Activated T-helper 2 cell treated with anti-CD3 and anti-CD28 coated beads, Interferon-gamma antibody, Interleukin-2, Interleukin-4, amounts not matched to agents 10 μg/mL and 5 μg/mL and 100 μg/mL, durations not matched to agents 14 hours and 24 hours and 36 hours (primary cell): ENCODE measurements at regions of chr2 and their contacts with region 1.

Region 1: GRCh38 chr2:158753641-158754611 is 41.2 kb upstream of the DAPL1 start:
- DNase-seq: peak; percentile 11
- H3K4me3 Mint-ChIP-seq: no peak overlapping the region
- H3K27ac Mint-ChIP-seq: no peak overlapping the region
- H3K4me1 Mint-ChIP-seq: no peaks in the 10 kb centered on the region
- H3K27me3 Mint-ChIP-seq: peaks cover 10% of the 10 kb centered on the region

Region 2: GRCh38 chr2:157492189-157492773 is 1261.6 kb before region 1 on chr2:
- intact Hi-C with region 1: loop called (anchors 10 kb)
- DNase-seq: peak; percentile 56
- H3K4me3 Mint-ChIP-seq: no peak overlapping the region
- H3K27ac Mint-ChIP-seq: no peak overlapping the region
- H3K4me1 Mint-ChIP-seq: peaks cover 47% of the 10 kb centered on the region
- H3K27me3 Mint-ChIP-seq: no peaks in the 10 kb centered on the region

Region 3: GRCh38 chr2:157777427-157777826 is 976.5 kb before region 1 on chr2:
- intact Hi-C with region 1: loop called (anchors 10 kb)
- DNase-seq: peak; percentile 20
- H3K4me3 Mint-ChIP-seq: no peak overlapping the region
- H3K27ac Mint-ChIP-seq: no peak overlapping the region
- H3K4me1 Mint-ChIP-seq: peaks cover 29% of the 10 kb centered on the region
- H3K27me3 Mint-ChIP-seq: no peaks in the 10 kb centered on the region

Region 4: GRCh38 chr2:158024288-158024898 is 729.5 kb before region 1 on chr2:
- intact Hi-C with region 1: loop called (anchors 5 kb)
- DNase-seq: no peak
- H3K4me3 Mint-ChIP-seq: no peak overlapping the region
- H3K27ac Mint-ChIP-seq: no peak overlapping the region
- H3K4me1 Mint-ChIP-seq: peaks cover 5% of the 10 kb centered on the region
- H3K27me3 Mint-ChIP-seq: peaks cover under 1% of the 10 kb centered on the region

Region 5: DNA sequence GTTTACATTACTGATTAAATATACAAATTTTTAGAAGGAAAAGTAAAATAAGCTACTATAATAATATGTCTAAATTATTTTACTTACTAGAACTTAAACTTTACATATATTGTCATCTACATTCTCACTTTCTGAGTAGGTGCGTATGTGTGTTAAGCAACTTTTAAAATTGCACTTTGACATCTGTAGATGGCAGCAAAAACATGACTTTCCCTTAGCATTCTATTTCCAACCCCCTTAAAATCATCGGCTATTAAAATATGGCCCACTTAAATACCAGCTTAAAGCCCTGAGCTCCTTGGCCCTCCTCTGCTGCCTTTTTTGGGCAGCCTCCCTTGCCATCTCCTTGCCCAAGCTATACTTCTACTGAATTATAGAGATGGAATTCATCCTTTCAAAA is 574.3 kb before region 1 on chr2:
- intact Hi-C with region 1: loop called (anchors 10 kb)
- DNase-seq: no peak
- H3K4me3 Mint-ChIP-seq: no peak overlapping the region
- H3K27ac Mint-ChIP-seq: no peak overlapping the region
- H3K4me1 Mint-ChIP-seq: no peaks in the 10 kb centered on the region
- H3K27me3 Mint-ChIP-seq: peaks cover 37% of the 10 kb centered on the region